ENCODE measurements at regions of chr1 and their contacts with region 1.

Region 1: GRCh38 chr1:196438329-196438728 is 169.9 kb downstream of the KCNT2 start:
- DNase-seq: peak; percentile 84
- ATAC-seq: peak; percentile 95
- H3K4me3 ChIP-seq: peak overlapping the region in 2 of 3 experiments; percentile 40 to 57; a peak in 3 of 6 replicates
- H3K27ac ChIP-seq: peak overlapping the region; percentile 52
- H3K4me1 ChIP-seq: peaks cover 38% of the 10 kb centered on the region
- H3K27me3 ChIP-seq: no peaks in the 10 kb centered on the region
- CTCF ChIP-seq: no peak
- EP300 ChIP-seq: peak in 1 of 2 experiments; percentile 94; a peak in 2 of 4 replicates
- POLR2A ChIP-seq: no peak
- RAD21 ChIP-seq: no peak

Region 2: GRCh38 chr1:196400478-196401451 is 37.6 kb before region 1 on chr1:
- CTCF ChIA-PET with region 1: no interaction called
- POLR2A ChIA-PET with region 1: interaction called, 3 read pairs
- in situ Hi-C with region 1: no loop called
- intact Hi-C with region 1: loop called (anchors 5 kb)
- DNase-seq: peak; percentile 83
- ATAC-seq: peak; percentile 99
- H3K4me3 ChIP-seq: peak overlapping the region in 1 of 3 experiments; percentile 24; a peak in 1 of 6 replicates
- H3K27ac ChIP-seq: peak overlapping the region; percentile 70
- H3K4me1 ChIP-seq: peaks cover 40% of the 10 kb centered on the region
- H3K27me3 ChIP-seq: no peaks in the 10 kb centered on the region
- CTCF ChIP-seq: no peak
- EP300 ChIP-seq: peak in 1 of 2 experiments; percentile 75; a peak in 2 of 4 replicates
- POLR2A ChIP-seq: no peak
- RAD21 ChIP-seq: no peak

Measured in HepG2 (cell line).